Endothelial cell of umbilical vein (primary cell): ENCODE measurements at regions of chr5 and their contacts with region 1.

Region 1: DNA sequence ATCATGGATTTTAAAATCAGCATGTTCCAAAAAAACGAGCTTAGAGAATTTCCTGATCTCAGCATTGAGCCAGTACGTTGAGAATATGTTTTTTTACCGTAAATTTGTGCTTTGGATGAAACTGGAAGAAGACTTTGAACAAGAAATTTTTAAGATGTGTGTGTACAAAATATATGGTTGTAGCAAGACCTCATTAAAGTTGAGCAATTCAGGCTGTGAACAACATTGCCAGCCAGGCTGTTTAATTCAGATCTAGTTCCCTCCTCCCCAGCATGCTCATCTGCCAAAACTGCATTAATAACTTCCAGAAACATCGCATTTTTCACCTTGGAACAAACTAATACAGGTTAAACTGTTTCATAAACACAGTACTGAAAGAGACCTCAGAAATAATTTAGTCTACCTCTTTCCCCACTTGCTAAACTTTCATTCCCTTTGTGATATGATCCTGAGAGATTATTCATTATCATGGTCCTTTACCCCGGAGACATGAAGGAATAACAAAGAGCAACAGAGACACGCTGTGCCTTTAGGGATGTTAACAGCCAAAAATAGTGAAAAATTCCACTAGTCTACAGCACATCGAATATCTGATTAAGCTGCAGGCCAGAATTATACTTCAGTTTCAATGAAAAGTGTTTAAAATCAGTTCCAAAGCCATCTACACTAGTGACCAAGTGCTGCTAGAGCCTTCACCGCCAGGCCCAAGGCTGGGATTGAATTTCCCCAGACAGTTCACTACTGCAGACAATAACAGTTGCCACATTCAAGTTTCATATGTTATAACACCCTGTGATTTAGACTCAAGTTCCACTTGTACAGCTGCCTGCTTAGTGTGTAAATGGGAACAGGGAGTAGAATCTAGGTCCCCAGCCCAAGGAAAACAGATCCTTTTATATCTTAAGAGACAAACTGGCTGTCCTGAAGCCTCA is 89.6 kb downstream of the EFNA5 start:
- DNase-seq: no peak
- H3K4me3 ChIP-seq: no peak overlapping the region
- H3K27ac ChIP-seq: no peak overlapping the region
- H3K4me1 ChIP-seq: peaks cover 8% of the 10 kb centered on the region
- H3K27me3 ChIP-seq: no peaks in the 10 kb centered on the region
- CTCF ChIP-seq: no peak
- POLR2A ChIP-seq: no peak

Region 2: GRCh38 chr5:107532169-107532878 is 48.8 kb before region 1 on chr5:
- CTCF ChIA-PET with region 1: no interaction called
- POLR2A ChIA-PET with region 1: no interaction called
- dilution Hi-C with region 1: no loop called
- intact Hi-C with region 1: no loop called
- DNase-seq: no peak
- H3K4me3 ChIP-seq: no peak overlapping the region
- H3K27ac ChIP-seq: no peak overlapping the region
- H3K4me1 ChIP-seq: no peaks in the 10 kb centered on the region
- H3K27me3 ChIP-seq: no peaks in the 10 kb centered on the region
- CTCF ChIP-seq: no peak
- POLR2A ChIP-seq: no peak

Region 3: DNA sequence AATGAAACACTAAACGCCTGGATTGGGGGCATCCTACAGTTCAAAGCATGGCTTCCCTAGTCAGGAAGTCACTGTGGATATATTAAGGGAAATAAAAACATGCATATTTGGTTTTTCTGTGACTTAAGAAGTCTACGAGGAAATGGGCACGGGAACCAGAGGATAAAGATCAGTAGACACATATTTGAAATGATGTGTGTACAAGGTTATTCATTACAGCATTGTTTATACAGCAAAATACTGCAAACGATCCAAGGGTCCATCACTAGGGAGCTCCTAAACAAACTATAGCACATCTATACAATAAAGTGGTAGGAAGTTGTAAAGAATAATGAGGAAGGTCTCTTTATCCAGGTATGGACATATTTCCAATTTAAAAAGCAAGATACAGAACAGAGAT is 17.8 kb after region 1 on chr5:
- CTCF ChIA-PET with region 1: no interaction called
- POLR2A ChIA-PET with region 1: no interaction called
- dilution Hi-C with region 1: no loop called
- intact Hi-C with region 1: loop called (anchors 2 kb)
- DNase-seq: peak; percentile 22
- H3K4me3 ChIP-seq: no peak overlapping the region
- H3K27ac ChIP-seq: no peak overlapping the region
- H3K4me1 ChIP-seq: peaks cover 8% of the 10 kb centered on the region
- H3K27me3 ChIP-seq: no peaks in the 10 kb centered on the region
- CTCF ChIP-seq: no peak
- POLR2A ChIP-seq: no peak